Left ventricle myocardium superior (tissue), 1 donor: ENCODE measurements at regions of chr3 and their contacts with region 1.

Region 1: DNA sequence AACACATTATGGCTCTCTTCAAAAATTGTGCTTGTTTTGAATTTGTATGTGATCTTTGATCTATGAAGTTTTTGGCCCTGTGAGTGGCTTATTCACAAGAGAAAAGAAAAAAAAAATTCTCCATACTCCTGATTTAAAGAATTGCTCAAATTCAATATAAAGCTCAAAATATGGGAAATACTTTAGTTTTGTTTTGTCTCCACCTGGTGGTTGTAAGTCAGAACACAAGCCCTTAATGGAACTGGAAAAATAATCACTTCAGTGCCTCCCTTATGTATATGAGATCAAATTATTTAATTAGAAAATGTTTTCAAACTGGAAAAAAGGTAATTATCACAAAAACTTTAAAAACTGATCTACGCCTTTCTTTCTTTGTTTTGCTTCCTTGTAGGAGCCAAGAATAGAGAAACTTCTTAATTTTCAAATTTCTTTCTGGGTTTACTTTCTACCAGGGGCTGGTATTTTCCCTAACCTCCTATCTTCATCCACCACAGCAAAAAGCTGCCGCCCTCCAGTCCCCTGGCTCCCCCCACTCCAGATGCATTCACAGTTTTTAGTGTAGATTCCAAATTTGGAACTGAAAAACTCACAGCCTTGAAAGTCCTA is 50.6 kb downstream of the SERP1 start:
- DNase-seq: no peak
- ATAC-seq: peak; percentile 22

Region 2: GRCh38 chr3:150238998-150239619 is 256.6 kb before region 1 on chr3:
- intact Hi-C with region 1: loop called (anchors 10 kb)
- DNase-seq: no peak
- ATAC-seq: peak; percentile 56

Region 3: DNA sequence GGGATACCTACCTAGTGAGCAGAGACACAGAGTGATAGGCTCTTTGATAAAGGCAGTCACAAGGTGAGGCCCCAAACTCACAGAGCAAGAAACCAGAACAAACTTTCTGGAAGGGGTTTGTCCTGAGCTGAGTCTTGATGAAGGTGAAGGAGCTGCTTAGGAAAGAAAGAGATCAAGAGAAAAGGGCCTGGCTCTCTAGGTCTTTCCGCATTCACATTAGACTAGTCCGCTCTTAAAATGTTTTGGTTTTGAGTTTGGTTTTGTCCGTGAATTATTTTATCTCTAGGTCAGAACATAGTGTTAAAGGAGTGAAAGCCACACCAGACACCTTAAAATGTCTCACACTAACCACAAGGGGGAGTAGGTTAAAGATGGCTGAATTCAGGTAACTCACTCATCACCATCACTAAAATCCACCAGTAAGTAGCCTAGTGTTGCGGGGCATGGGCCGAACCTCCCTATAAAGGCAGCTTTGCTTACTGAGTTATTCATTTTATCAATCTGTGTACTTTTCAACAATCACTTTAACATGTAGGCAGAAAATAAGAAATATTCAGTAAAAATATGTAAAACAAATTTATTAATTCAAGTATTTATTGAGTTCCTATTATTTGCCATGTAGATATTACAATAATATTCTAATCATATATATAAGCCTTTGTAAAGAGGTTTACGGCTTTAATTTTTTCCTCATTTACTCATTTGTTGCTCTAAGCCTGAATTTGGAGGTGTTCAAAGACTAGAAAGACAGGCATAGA is 209.1 kb before region 1 on chr3:
- intact Hi-C with region 1: loop called (anchors 5 kb)
- DNase-seq: no peak
- ATAC-seq: peak; percentile 70